ENCODE measurements at regions of chr17 and their contacts with region 1.

Region 1: DNA sequence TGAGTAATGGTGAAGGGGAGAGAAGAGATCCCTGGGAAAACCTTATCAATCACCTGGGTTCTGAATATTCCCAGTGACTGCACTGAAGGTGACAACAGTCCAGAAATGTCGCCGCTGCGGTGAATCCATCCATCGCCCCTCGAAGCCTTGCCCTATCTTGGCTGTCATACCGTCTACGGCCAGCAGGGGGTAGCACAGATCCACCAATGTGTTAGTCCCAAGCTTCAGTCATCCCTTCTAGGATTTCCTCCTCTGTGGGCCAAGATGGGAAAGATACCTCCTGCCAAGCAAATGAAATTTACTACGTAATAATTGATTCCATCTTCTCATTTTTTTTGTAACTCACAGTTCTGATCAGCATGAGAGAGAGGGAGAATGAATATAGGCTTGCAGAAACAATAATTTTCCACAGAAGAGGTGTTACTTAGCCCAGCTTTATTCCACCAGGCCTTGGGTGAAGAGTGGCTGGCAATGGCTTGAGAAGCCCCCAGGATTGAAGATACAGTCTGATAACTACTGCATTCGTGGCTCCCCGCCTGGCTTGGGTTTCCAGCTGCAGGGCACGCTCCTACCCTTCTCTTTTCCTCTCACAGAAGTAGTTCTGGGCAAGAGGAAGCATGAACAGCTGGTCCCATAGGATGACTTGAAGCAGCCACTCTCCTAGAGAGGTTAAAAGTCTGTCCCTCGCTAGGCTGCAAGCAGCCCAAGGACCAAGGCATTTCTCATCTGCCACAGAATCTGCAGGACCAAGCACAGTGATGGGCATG is 2.6 kb upstream of the FMNL1 start:
- DNase-seq: peak; percentile 83
- ATAC-seq: peak; percentile 29
- H3K4me3 Mint-ChIP-seq: peak overlapping the region; percentile 82
- H3K27ac Mint-ChIP-seq: peak overlapping the region; percentile 54
- H3K4me1 Mint-ChIP-seq: peaks cover 40% of the 10 kb centered on the region
- H3K27me3 Mint-ChIP-seq: no peaks in the 10 kb centered on the region
- CTCF ChIP-seq: peak; percentile 95

Region 2: GRCh38 chr17:44878627-44879221 is 340.4 kb before region 1 on chr17:
- CTCF ChIA-PET with region 1: no interaction called
- POLR2A ChIA-PET with region 1: no interaction called
- intact Hi-C with region 1: no loop called
- DNase-seq: no peak
- ATAC-seq: no peak
- H3K4me3 Mint-ChIP-seq: no peak overlapping the region
- H3K27ac Mint-ChIP-seq: no peak overlapping the region
- H3K4me1 Mint-ChIP-seq: no peaks in the 10 kb centered on the region
- H3K27me3 Mint-ChIP-seq: no peaks in the 10 kb centered on the region
- CTCF ChIP-seq: no peak

Region 3: GRCh38 chr17:44968226-44969143 is 250.6 kb before region 1 on chr17 and contains the start of gene C1QL1:
- CTCF ChIA-PET with region 1: no interaction called
- POLR2A ChIA-PET with region 1: no interaction called
- intact Hi-C with region 1: no loop called
- DNase-seq: peak; percentile 82
- ATAC-seq: peak; percentile 98
- H3K4me3 Mint-ChIP-seq: peak within 1 kb of the TSS; percentile 78
- H3K27ac Mint-ChIP-seq: no peak within 1 kb of the TSS
- H3K4me1 Mint-ChIP-seq: peaks cover 37% of the 10 kb centered on the region
- H3K27me3 Mint-ChIP-seq: peaks cover 44% of the 10 kb centered on the region
- CTCF ChIP-seq: no peak
- total RNA-seq, gene C1QL1: not detected in 2 replicates

Region 4: DNA sequence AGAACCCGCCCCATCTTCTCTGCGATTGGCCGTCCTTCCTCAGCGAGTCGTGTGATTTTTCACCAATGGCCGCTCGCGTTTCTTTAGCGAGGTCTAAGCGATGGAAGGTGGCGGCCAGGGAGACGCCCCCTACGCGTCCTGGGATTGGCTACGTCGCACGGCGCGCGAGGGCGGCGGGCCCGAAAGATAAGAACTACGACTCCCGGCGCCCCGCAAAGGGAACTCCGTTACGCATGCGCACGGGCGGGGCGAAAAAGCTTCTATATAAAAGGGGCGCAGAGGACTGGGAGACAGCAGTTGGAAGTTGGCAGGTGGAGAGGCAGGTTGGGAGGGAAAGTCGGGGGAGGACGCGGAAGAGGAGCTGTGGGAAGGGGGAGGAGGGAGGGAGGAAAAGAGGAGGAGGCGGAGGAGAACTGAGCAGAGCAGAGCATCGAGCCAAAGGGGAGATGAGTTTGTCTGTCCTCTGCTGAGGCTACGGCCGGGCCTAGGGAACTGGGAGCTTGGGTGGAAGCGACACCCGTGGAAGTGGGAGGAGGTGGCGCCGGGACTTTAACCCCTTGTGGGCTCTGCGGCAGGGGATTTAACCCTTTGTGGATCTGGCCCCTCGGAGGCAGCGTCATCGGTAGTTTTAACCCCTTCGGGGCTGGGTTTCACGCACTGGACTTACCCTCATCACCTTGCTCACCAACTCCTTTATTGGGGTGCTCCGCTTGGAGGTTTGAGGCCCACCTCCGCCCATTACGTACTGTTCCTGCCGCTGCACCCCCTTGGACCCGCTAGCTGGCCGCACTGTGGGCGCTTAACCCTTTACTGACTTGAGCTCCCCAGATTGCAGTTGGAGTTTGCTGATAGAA is 70.7 kb before region 1 on chr17 and contains the start of gene HEXIM1:
- CTCF ChIA-PET with region 1: interaction called, 7 read pairs
- POLR2A ChIA-PET with region 1: interaction called, 49 read pairs
- intact Hi-C with region 1: no loop called
- DNase-seq: peak; percentile 97
- ATAC-seq: peak; percentile 74
- H3K4me3 Mint-ChIP-seq: peak within 1 kb of the TSS; percentile 96
- H3K27ac Mint-ChIP-seq: peak within 1 kb of the TSS; percentile 100
- H3K4me1 Mint-ChIP-seq: peaks cover 61% of the 10 kb centered on the region
- H3K27me3 Mint-ChIP-seq: no peaks in the 10 kb centered on the region
- CTCF ChIP-seq: no peak
- total RNA-seq, gene HEXIM1: 19.5 and 21.5 TPM in 2 replicates

Region 5: DNA sequence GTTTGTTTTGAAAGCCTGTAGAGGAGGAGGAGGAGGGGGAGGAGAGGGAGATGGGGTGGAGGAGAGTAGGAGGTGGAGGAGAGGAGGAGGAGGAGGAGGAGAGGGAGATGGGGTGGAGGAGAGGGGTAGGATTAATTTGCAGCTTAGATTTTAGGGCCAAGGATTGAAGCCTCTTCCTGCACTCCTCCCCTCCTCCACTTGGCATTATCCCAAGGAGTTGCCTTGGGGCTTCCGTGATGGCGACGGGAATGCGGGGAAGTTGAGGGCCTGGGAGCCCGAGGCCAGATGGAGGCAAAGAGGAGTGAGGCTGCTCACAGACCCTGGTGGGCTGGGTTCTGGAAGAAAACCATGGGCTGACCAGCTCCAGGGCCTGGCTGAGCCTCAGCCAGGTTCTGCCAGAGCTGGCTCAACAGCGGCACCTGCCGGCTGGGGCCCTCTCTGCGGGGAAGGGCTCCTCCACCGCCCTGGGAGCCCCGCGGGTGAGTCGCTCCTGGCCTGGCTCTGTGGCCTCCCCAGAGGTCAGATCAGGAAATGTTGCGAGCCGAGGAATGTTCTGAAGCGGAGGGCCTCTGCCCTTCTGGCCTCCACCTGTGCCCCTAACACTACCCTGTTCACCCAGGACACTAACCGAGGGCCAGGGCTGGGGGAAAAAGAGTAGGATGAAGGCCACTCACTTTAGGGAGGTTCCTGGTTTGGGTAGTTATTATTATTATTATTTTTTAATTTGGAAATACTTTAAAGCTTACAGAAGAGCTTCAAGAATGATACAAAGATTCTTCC is 21.3 kb before region 1 on chr17:
- CTCF ChIA-PET with region 1: interaction called, 10 read pairs
- POLR2A ChIA-PET with region 1: interaction called, 3 read pairs
- intact Hi-C with region 1: no loop called
- DNase-seq: peak; percentile 91
- ATAC-seq: peak; percentile 100
- H3K4me3 Mint-ChIP-seq: no peak overlapping the region
- H3K27ac Mint-ChIP-seq: no peak overlapping the region
- H3K4me1 Mint-ChIP-seq: peaks cover 4% of the 10 kb centered on the region
- H3K27me3 Mint-ChIP-seq: no peaks in the 10 kb centered on the region
- CTCF ChIP-seq: no peak

Region 6: GRCh38 chr17:45261577-45262515 is 42.8 kb after region 1 on chr17 and contains the start of gene SPATA32:
- CTCF ChIA-PET with region 1: interaction called, 60 read pairs
- POLR2A ChIA-PET with region 1: interaction called, 6 read pairs
- intact Hi-C with region 1: no loop called
- DNase-seq: peak; percentile 46
- ATAC-seq: peak; percentile 76
- H3K4me3 Mint-ChIP-seq: peak within 1 kb of the TSS; percentile 86
- H3K27ac Mint-ChIP-seq: peak within 1 kb of the TSS; percentile 77
- H3K4me1 Mint-ChIP-seq: peaks cover 17% of the 10 kb centered on the region
- H3K27me3 Mint-ChIP-seq: no peaks in the 10 kb centered on the region
- CTCF ChIP-seq: no peak
- total RNA-seq, gene SPATA32: 0.27 and 0.39 TPM in 2 replicates

Region 7: GRCh38 chr17:45307290-45308015 is 88.4 kb after region 1 on chr17:
- CTCF ChIA-PET with region 1: interaction called, 9 read pairs
- POLR2A ChIA-PET with region 1: interaction called, 20 read pairs
- intact Hi-C with region 1: no loop called
- DNase-seq: peak; percentile 42
- ATAC-seq: peak; percentile 69
- H3K4me3 Mint-ChIP-seq: peak overlapping the region; percentile 81
- H3K27ac Mint-ChIP-seq: peak overlapping the region; percentile 100
- H3K4me1 Mint-ChIP-seq: peaks cover 93% of the 10 kb centered on the region
- H3K27me3 Mint-ChIP-seq: no peaks in the 10 kb centered on the region
- CTCF ChIP-seq: no peak

Region 8: DNA sequence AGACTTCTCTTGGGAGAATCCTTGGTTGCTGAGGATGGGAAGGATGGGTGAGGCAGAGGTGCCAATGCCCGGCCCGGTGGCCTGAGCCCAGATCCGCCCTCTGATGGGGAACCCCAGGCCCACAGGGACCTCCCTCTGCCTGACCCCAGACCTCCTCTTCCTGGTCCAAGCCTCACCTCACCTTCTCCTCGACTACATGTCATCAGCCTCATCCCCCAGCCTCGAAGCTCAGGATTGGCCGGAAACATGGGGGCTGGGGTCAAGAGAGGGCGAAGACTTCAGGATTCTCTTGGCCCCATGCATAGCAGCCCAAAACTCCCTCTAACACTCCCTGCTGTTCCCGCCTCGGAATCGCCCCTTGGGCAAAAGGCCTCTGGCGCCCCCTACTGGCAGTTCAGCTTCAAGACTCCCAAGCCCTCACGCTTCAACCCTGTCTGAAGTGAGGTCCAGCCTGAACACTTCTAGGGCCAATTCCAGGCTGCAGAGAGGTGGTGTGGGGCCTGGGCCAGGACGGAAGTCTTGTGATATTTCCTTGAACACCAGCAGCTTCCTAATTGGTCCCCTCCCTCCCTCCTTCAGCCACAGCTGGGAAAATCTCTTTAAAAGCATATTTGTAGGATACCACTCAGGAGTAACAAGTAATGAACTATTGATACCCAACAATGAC is 166.4 kb after region 1 on chr17:
- CTCF ChIA-PET with region 1: interaction called, 68 read pairs
- POLR2A ChIA-PET with region 1: interaction called, 9 read pairs
- intact Hi-C with region 1: loop called (anchors 1 kb)
- DNase-seq: peak; percentile 84
- ATAC-seq: peak; percentile 94
- H3K4me3 Mint-ChIP-seq: no peak overlapping the region
- H3K27ac Mint-ChIP-seq: no peak overlapping the region
- H3K4me1 Mint-ChIP-seq: peaks cover 7% of the 10 kb centered on the region
- H3K27me3 Mint-ChIP-seq: peaks cover 8% of the 10 kb centered on the region
- CTCF ChIP-seq: peak; percentile 35

Measured in activated B cell treated with CpG ODN at 0.5 μM for 24 hours (primary cell).